ENCODE measurements at regions of chr1 and their contacts with region 1.

Region 1: DNA sequence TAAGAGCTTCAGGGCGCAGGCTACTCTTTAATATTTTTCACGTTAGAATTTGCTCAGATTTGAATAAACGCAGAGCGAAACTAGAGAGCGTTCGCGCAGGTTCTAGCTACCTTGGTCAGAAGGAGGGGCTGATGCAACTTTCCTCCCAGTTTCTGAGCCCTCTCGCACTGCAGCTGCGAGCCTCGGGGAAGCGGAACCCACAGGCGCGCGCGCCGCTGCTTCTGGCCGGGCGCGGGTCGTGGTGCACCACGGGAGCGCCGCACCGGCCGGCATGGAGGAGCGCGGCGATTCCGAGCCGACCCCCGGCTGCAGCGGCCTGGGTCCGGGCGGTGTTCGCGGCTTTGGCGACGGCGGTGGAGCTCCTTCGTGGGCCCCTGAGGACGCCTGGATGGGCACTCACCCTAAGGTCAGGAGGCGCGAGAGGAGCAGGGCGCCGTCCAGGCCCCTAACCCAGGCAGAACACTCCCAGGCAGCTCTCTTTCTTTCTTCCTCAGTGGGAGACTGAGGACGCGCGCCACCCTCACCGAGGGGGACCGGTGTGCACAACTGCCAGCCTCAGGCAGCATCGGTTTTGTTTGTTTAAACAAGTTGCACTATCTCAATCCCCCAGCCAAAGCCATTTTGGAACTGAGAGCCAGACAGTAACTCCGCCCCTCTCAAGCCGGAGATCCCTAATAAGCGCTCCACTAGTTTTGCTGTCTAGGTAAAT is at the start of gene TSEN15:
- DNase-seq: peak; percentile 76
- ATAC-seq: peak; percentile 95
- H3K4me3 Mint-ChIP-seq: peak within 1 kb of the TSS; percentile 98
- H3K27ac Mint-ChIP-seq: peak within 1 kb of the TSS; percentile 98
- H3K4me1 Mint-ChIP-seq: peaks cover 36% of the 10 kb centered on the region
- H3K27me3 Mint-ChIP-seq: peaks cover 26% of the 10 kb centered on the region
- CTCF ChIP-seq: no peak
- total RNA-seq, gene TSEN15: 60.8 and 61.2 TPM in 2 replicates

Region 2: GRCh38 chr1:184036517-184036949 is 15.1 kb before region 1 on chr1:
- CTCF ChIA-PET with region 1: interaction called, 3 read pairs
- POLR2A ChIA-PET with region 1: interaction called, 11 read pairs
- intact Hi-C with region 1: loop called (anchors 1 kb)
- DNase-seq: peak; percentile 17
- ATAC-seq: peak; percentile 25
- H3K4me3 Mint-ChIP-seq: peak overlapping the region; percentile 53
- H3K27ac Mint-ChIP-seq: no peak overlapping the region
- H3K4me1 Mint-ChIP-seq: peaks cover 16% of the 10 kb centered on the region
- H3K27me3 Mint-ChIP-seq: peaks cover 51% of the 10 kb centered on the region
- CTCF ChIP-seq: no peak

Region 3: DNA sequence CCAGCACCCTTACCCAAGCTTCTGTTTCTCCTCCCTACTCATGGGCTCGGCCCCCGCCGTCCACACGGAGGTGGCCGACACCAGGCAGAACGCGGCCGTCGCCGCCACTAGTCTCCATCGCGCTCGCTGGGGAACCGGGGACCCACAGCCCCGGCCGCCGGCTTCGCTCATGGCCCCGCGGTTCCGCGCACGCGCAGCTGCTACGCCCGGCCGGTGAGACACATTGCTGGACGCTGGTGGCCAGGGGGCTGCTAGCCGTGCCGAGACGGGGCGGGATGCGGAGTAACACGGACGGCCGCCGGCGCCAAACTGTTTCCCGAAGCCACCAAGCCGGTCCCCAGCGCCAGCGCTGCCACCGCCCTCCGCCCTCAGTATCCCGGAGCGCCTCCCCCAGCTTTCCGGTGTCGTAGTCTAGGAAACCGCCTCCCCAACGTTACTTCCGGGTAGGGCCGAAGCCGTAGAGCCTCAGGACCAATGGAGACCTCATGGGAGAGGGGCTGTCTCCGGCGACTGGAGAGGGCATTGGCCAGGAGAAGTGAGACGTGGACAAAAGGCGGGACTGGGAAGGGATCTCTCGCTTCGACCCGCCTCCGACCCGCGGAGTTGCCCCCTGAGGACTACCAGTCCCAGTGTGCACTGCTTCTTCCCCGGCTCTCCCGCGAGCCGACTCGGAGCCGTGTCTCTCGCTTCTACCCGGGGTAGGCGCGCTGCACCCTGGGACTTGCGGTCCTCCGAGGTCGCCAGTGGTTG is 703.0 kb after region 1 on chr1 and contains the start of gene EDEM3:
- CTCF ChIA-PET with region 1: no interaction called
- POLR2A ChIA-PET with region 1: interaction called, 3 read pairs
- intact Hi-C with region 1: loop called (anchors 1 kb)
- DNase-seq: peak; percentile 90
- ATAC-seq: peak; percentile 95
- H3K4me3 Mint-ChIP-seq: peak within 1 kb of the TSS; percentile 95
- H3K27ac Mint-ChIP-seq: peak within 1 kb of the TSS; percentile 86
- H3K4me1 Mint-ChIP-seq: peaks cover 23% of the 10 kb centered on the region
- H3K27me3 Mint-ChIP-seq: peaks cover under 1% of the 10 kb centered on the region
- CTCF ChIP-seq: no peak
- total RNA-seq, gene EDEM3: 11.5 and 16.2 TPM in 2 replicates